ENCODE measurements at regions of chr4 and their contacts with region 1.

Region 1: GRCh38 chr4:108620101-108620932 is at the start of gene RPL34:
- DNase-seq: peak; percentile 95 to 99 (median 96)
- H3K4me3 ChIP-seq: peak within 1 kb of the TSS; percentile 66 to 91
- H3K4me3 Mint-ChIP-seq: peak within 1 kb of the TSS; percentile 87 to 97 (median 96)
- H3K27ac ChIP-seq: peak within 1 kb of the TSS; percentile 79
- H3K27ac Mint-ChIP-seq: peak within 1 kb of the TSS; percentile 92 to 99 (median 98)
- H3K4me1 ChIP-seq: peaks cover 49% of the 10 kb centered on the region
- H3K4me1 Mint-ChIP-seq: peaks cover 37 to 58% (median 47%) of the 10 kb centered on the region in 4 donors
- H3K27me3 ChIP-seq: no peaks in the 10 kb centered on the region
- H3K27me3 Mint-ChIP-seq: no peaks in the 10 kb centered on the region
- total RNA-seq, gene RPL34: 2,902 to 3,093 TPM

Region 2: DNA sequence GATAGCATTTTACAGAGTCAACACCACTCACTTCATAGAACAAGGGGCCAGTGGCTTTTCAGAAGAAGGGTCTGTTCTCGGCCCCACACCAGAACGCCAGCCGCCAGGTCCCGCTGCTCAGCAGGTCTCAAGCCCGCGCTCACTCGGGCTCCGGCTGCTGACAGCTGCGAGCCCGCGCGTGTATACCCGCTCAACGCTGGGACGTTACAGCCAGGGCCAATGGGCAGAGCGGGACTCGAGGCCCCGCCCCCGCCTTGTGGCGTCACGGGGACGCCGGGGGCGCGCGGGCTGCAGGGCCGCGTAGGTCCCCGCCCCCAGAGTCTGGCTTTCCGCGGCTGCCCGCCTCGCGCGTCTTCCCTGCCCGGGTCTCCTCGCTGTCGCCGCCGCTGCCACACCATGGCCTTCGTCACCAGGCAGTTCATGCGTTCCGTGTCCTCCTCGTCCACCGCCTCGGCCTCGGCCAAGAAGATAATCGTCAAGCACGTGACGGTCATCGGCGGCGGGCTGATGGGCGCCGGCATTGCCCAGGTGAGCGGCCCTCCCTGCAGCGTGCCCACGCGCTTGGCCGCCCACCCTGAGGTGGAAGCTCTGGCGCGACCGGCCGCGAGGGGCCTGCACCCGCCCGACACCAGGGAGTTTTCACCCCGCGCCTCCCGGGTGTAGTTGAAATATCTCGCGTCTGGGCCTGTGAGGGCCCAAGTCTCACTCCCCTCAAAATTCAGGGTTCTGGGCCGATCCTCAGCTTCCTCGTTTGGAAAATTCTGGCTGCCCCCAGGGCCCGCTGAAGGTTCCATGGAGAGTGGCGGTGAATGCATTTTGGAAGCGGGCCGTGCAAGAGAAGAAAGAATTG is 630.6 kb before region 1 on chr4 and contains the start of gene HADH:
- CTCF ChIA-PET with region 1: no interaction called
- POLR2A ChIA-PET with region 1: interaction called, 10 read pairs
- intact Hi-C with region 1: no loop called
- DNase-seq: peak; percentile 92 to 95 (median 95)
- H3K4me3 ChIP-seq: peak within 1 kb of the TSS; percentile 49 to 75
- H3K4me3 Mint-ChIP-seq: peak within 1 kb of the TSS; percentile 90 to 99 (median 97)
- H3K27ac ChIP-seq: peak within 1 kb of the TSS; percentile 80
- H3K27ac Mint-ChIP-seq: peak within 1 kb of the TSS; percentile 87 to 98 (median 96)
- H3K4me1 ChIP-seq: peaks cover 39% of the 10 kb centered on the region
- H3K4me1 Mint-ChIP-seq: peaks cover 30 to 53% (median 42%) of the 10 kb centered on the region in 4 donors
- H3K27me3 ChIP-seq: no peaks in the 10 kb centered on the region
- H3K27me3 Mint-ChIP-seq: no peaks in the 10 kb centered on the region
- total RNA-seq, gene HADH: 20.0 to 23.0 TPM

Region 3: GRCh38 chr4:108166441-108167315 is 453.6 kb before region 1 on chr4:
- CTCF ChIA-PET with region 1: no interaction called
- POLR2A ChIA-PET with region 1: interaction called, 3 read pairs
- intact Hi-C with region 1: loop called (anchors 1 kb)
- DNase-seq: peak; percentile 56 to 71 (median 57)
- H3K4me3 ChIP-seq: peak overlapping the region; percentile 81 to 91
- H3K4me3 Mint-ChIP-seq: peak overlapping the region; percentile 98 to 100 (median 98)
- H3K27ac ChIP-seq: peak overlapping the region; percentile 64
- H3K27ac Mint-ChIP-seq: peak overlapping the region; percentile 85 to 96 (median 94)
- H3K4me1 ChIP-seq: peaks cover 46% of the 10 kb centered on the region
- H3K4me1 Mint-ChIP-seq: peaks cover 23 to 78% (median 38%) of the 10 kb centered on the region in 4 donors
- H3K27me3 ChIP-seq: peaks cover 11% of the 10 kb centered on the region
- H3K27me3 Mint-ChIP-seq: peaks cover 15 to 28% of the 10 kb centered on the region in 2 donors

Region 4: GRCh38 chr4:108601532-108601931 is 18.8 kb before region 1 on chr4:
- CTCF ChIA-PET with region 1: no interaction called
- POLR2A ChIA-PET with region 1: interaction called, 9 read pairs
- intact Hi-C with region 1: loop called (anchors 1 kb)
- DNase-seq: peak in 4 of 5 donors; percentile 19 to 47 (median 38)
- H3K4me3 ChIP-seq: no peak overlapping the region
- H3K4me3 Mint-ChIP-seq: peak overlapping the region in 7 of 8 donors; percentile 19 to 75 (median 65)
- H3K27ac ChIP-seq: no peak overlapping the region
- H3K27ac Mint-ChIP-seq: peak overlapping the region in 6 of 7 donors; percentile 31 to 90 (median 76)
- H3K4me1 ChIP-seq: peaks cover 17% of the 10 kb centered on the region
- H3K4me1 Mint-ChIP-seq: peaks cover 13 to 22% (median 18%) of the 10 kb centered on the region in 4 donors
- H3K27me3 ChIP-seq: no peaks in the 10 kb centered on the region
- H3K27me3 Mint-ChIP-seq: no peaks in the 10 kb centered on the region

Region 5: DNA sequence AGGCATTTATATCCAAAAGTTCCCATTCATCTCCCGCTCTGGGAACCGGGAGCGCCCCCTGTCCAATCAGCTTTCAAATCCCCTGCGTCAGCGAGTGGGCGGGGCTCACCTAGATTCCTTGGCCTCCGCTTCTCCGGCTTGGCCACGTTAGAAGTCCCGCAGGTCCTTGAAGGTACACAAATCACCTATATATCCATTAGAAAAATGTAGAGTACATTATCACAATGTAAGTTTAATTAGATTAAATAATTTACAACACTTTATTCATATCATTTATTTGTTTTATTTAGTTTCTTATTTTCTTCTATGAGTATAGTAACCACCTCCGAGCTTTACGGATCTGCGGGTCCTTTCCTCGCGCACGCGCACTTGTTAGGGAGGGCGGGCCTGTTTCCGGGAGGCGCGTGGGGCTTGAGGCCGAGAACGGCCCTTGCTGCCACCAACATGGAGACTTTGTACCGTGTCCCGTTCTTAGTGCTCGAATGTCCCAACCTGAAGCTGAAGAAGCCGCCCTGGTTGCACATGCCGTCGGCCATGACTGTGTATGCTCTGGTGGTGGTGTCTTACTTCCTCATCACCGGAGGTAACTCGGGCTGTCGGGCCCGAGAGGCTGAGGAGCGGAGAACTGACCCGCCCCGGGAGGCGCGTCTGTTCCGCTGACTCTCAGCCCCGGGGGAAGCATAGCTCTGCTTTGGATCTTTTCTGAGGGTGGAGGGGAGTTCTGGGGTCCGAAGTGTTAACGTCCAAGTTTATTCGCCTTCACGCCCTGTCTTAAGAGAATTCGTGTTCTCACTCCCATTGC is 30.1 kb after region 1 on chr4 and contains the start of gene OSTC:
- CTCF ChIA-PET with region 1: interaction called, 3 read pairs
- POLR2A ChIA-PET with region 1: interaction called, 40 read pairs
- intact Hi-C with region 1: loop called (anchors 1 kb)
- DNase-seq: peak; percentile 91 to 95 (median 93)
- H3K4me3 ChIP-seq: peak within 1 kb of the TSS; percentile 77 to 86
- H3K4me3 Mint-ChIP-seq: peak within 1 kb of the TSS; percentile 93 to 99 (median 98)
- H3K27ac ChIP-seq: peak within 1 kb of the TSS; percentile 98
- H3K27ac Mint-ChIP-seq: peak within 1 kb of the TSS; percentile 98 to 99 (median 99)
- H3K4me1 ChIP-seq: peaks cover 37% of the 10 kb centered on the region
- H3K4me1 Mint-ChIP-seq: peaks cover 23 to 50% (median 37%) of the 10 kb centered on the region in 4 donors
- H3K27me3 ChIP-seq: no peaks in the 10 kb centered on the region
- H3K27me3 Mint-ChIP-seq: no peaks in the 10 kb centered on the region
- total RNA-seq, gene OSTC: 67.9 to 72.1 TPM

Region 6: GRCh38 chr4:109815151-109816081 is 1195.1 kb after region 1 on chr4 and contains the start of gene GAR1:
- CTCF ChIA-PET with region 1: no interaction called
- POLR2A ChIA-PET with region 1: no interaction called
- intact Hi-C with region 1: loop called (anchors 1 kb)
- DNase-seq: peak; percentile 85 to 93 (median 87)
- H3K4me3 ChIP-seq: peak within 1 kb of the TSS; percentile 98 to 100
- H3K4me3 Mint-ChIP-seq: peak within 1 kb of the TSS; percentile 97 to 99 (median 98)
- H3K27ac ChIP-seq: peak within 1 kb of the TSS; percentile 93
- H3K27ac Mint-ChIP-seq: peak within 1 kb of the TSS; percentile 97 to 99 (median 99)
- H3K4me1 ChIP-seq: peaks cover 22% of the 10 kb centered on the region
- H3K4me1 Mint-ChIP-seq: peaks cover 27 to 44% (median 36%) of the 10 kb centered on the region in 4 donors
- H3K27me3 ChIP-seq: no peaks in the 10 kb centered on the region
- H3K27me3 Mint-ChIP-seq: no peaks in the 10 kb centered on the region
- total RNA-seq, gene GAR1: 13.7 to 14.1 TPM

Measured in CD4-positive, alpha-beta memory T cell (primary cell).